Endothelial cell of umbilical vein (primary cell): ENCODE measurements at regions of chr2 and their contacts with region 1.

Region 1: GRCh38 chr2:85642725-85643124 is 25.3 kb downstream of the SFTPB start:
- DNase-seq: no peak
- H3K4me3 ChIP-seq: no peak overlapping the region
- H3K27ac ChIP-seq: no peak overlapping the region
- H3K4me1 ChIP-seq: no peaks in the 10 kb centered on the region
- H3K27me3 ChIP-seq: no peaks in the 10 kb centered on the region
- CTCF ChIP-seq: no peak
- POLR2A ChIP-seq: no peak

Region 2: DNA sequence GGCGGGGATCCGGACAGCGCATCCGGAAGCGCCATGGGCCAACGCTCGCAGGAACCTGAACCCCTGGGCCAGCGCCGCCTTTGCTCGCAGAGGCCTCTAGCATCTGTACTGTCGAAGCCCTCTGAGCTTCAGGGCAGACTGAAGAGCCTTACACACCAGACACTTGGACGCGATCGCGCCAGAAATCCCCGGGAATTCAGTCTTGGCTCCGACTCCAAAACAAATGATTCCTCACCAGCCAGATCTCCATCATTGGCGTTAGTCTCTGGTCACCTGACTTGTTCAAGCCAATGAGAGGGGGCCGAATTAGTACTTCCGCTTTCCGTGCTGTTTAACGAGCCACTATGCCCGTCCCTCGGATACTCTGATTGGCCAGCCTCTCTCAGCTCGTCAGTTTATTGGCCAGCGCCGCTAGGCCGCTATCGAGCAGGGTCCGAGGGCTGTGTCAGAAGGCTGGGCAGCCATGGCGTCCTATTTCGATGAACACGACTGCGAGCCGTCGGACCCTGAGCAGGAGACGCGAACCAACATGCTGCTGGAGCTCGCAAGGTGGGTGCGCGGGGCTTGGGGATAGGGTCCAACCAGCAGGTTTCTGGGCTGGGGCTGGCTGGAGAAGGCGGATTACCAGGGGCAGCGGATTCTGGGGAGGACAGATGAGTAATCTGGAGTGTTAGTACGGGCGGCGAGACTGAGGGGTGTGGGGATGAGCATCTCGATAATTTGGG is 47.3 kb before region 1 on chr2 and contains the start of gene RNF181:
- CTCF ChIA-PET with region 1: interaction called, 6 read pairs
- POLR2A ChIA-PET with region 1: no interaction called
- dilution Hi-C with region 1: no loop called
- intact Hi-C with region 1: loop called (anchors 1 kb)
- DNase-seq: peak; percentile 99
- H3K4me3 ChIP-seq: peak within 1 kb of the TSS; percentile 38 to 94 (median 62)
- H3K27ac ChIP-seq: peak within 1 kb of the TSS; percentile 67
- H3K4me1 ChIP-seq: peaks cover 23% of the 10 kb centered on the region
- H3K27me3 ChIP-seq: no peaks in the 10 kb centered on the region
- CTCF ChIP-seq: no peak
- POLR2A ChIP-seq: peak; percentile 90
- total RNA-seq, gene RNF181: 133 and 142 TPM in 2 replicates

Region 3: GRCh38 chr2:85628658-85629057 is 14.1 kb before region 1 on chr2:
- CTCF ChIA-PET with region 1: interaction called, 74 read pairs
- POLR2A ChIA-PET with region 1: no interaction called
- dilution Hi-C with region 1: no loop called
- intact Hi-C with region 1: no loop called
- DNase-seq: no peak
- H3K4me3 ChIP-seq: no peak overlapping the region
- H3K27ac ChIP-seq: no peak overlapping the region
- H3K4me1 ChIP-seq: no peaks in the 10 kb centered on the region
- H3K27me3 ChIP-seq: no peaks in the 10 kb centered on the region
- CTCF ChIP-seq: no peak
- POLR2A ChIP-seq: no peak

Region 4: GRCh38 chr2:85678794-85679672 is 36.3 kb after region 1 on chr2:
- CTCF ChIA-PET with region 1: interaction called, 24 read pairs
- POLR2A ChIA-PET with region 1: no interaction called
- dilution Hi-C with region 1: no loop called
- intact Hi-C with region 1: no loop called
- DNase-seq: peak; percentile 86
- H3K4me3 ChIP-seq: no peak overlapping the region
- H3K27ac ChIP-seq: no peak overlapping the region
- H3K4me1 ChIP-seq: peaks cover 25% of the 10 kb centered on the region
- H3K27me3 ChIP-seq: no peaks in the 10 kb centered on the region
- CTCF ChIP-seq: peak; percentile 98
- POLR2A ChIP-seq: no peak

Region 5: DNA sequence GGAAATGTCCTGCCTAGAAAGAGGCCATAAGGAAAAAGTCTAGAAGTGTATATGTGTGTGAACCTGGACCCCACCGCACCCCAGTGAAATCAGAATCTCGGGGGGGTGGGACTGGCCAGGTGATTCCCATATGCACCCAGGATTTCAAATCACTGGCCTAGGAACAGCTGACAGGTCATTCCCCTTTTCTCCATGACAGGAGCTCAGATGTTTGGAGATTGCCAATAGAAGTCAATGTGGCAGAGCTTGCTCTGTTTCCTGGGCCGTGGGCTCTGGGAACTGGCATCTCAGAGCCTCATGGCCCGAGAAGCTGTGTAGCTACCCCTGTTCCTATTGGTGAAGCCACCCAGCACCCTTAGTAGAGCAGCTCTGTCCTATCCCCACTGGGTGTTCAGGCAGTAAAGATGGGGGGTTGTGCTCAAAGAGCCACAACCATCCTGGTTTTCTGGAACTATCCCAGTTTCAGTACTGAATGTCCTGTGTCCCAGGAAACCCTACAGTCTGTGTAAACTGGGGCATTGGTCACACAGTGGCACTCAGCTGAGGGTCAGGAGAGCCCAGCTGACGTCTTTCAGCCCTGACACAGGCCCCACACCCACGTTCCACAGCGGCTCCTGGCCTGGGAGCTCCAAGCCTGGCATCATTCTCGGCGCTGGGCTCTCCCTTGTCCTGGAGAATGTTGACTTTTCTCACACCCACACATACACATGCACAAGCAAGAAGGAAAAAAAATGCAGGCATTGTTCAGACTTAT is 70.3 kb after region 1 on chr2:
- CTCF ChIA-PET with region 1: interaction called, 138 read pairs
- POLR2A ChIA-PET with region 1: no interaction called
- dilution Hi-C with region 1: no loop called
- intact Hi-C with region 1: no loop called
- DNase-seq: peak; percentile 30
- H3K4me3 ChIP-seq: no peak overlapping the region
- H3K27ac ChIP-seq: no peak overlapping the region
- H3K4me1 ChIP-seq: peaks cover 9% of the 10 kb centered on the region
- H3K27me3 ChIP-seq: peaks cover 2% of the 10 kb centered on the region in 2 experiments
- CTCF ChIP-seq: no peak
- POLR2A ChIP-seq: no peak

Region 6: DNA sequence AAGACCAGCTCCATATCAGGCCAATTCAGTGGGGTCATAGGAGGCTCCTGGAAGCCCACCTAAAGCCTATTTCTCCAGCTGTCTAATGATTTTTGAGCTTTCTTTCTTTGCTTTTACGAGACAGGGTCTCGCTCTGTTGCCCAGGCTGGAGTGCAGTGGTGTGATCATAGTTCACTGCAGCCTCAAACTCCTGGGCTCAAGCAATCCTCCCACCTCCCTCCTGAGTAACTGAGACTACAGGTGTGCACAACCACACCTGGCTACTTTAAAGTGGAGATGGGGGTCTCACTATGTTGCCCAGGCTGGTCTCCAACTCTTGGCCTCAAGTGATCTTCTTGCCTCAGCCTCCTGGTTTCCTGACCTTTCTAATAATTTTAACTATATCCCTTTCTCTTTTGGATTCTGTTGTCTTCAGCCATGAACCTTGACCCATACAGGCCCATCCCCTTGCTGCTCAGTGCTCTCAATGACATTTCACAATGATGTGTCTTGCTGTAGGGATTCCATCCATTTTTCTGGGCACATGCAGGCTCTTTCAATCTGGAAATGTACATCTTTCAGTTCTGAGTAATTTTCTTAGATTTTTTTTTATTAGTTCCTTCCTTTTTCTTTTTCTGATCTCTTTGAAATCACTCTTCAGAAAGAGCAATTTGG is 81.1 kb after region 1 on chr2:
- CTCF ChIA-PET with region 1: interaction called, 25 read pairs
- POLR2A ChIA-PET with region 1: no interaction called
- dilution Hi-C with region 1: no loop called
- intact Hi-C with region 1: loop called (anchors 5 kb)
- DNase-seq: no peak
- H3K4me3 ChIP-seq: no peak overlapping the region
- H3K27ac ChIP-seq: no peak overlapping the region
- H3K4me1 ChIP-seq: no peaks in the 10 kb centered on the region
- H3K27me3 ChIP-seq: peaks cover 0 to 8% of the 10 kb centered on the region in 2 experiments
- CTCF ChIP-seq: no peak
- POLR2A ChIP-seq: no peak